OCI-LY7 (cell line): ENCODE measurements at regions of chr14 and their contacts with region 1.

Region 1: DNA sequence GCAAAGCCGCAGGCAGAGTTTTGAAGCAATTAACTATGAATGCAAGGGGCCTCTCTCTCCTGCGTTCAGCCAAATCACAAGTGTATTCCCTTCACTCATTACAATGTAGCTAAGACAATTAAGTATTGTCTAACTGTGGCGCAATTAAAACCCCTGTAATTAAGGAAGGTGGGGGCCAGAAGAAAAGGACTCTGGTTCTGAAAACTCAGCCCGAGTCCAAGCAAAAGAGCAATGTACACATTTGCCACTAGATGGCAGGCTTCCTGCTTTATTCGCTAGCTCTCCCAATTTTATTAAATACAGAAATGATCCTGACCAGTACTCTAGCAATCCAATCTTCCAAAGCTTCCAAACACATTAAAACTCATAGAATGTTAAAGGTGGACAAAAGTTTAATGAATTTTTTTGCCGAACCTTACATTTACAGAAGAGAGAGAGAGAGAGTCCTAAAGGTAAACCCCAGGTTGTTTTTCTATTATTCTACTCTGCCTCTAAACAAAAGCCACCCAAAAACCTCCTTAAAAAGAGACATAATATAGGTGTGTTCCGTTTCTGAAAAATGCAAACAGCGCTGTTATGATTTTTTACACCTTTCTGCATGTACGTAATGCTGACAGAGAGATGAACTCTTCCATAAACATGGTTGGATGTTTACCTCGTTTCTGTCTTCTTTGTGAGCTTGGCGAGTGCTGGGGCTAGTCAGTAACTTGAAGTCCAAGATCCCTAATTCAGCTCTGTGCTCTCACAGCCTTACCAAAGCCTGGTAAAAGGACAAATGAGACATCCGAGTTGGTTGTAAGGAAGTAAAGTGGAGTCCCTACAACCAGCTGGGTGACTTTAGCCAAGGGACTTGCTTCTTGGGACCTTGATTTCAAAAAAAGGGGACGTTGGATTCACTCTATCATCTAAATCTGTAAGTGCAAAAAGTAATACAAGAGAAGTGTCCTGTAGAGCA is 50.9 kb upstream of the VASH1 start:
- DNase-seq: peak; percentile 66
- H3K4me3 ChIP-seq: no peak overlapping the region
- H3K27ac ChIP-seq: no peak overlapping the region
- H3K4me1 ChIP-seq: no peaks in the 10 kb centered on the region
- CTCF ChIP-seq: peak; percentile 95

Region 2: GRCh38 chr14:76697246-76697905 is 13.0 kb before region 1 on chr14:
- CTCF ChIA-PET with region 1: no interaction called
- POLR2A ChIA-PET with region 1: no interaction called
- intact Hi-C with region 1: no loop called
- DNase-seq: no peak
- H3K4me3 ChIP-seq: no peak overlapping the region
- H3K27ac ChIP-seq: no peak overlapping the region
- H3K4me1 ChIP-seq: no peaks in the 10 kb centered on the region
- CTCF ChIP-seq: no peak

Region 3: DNA sequence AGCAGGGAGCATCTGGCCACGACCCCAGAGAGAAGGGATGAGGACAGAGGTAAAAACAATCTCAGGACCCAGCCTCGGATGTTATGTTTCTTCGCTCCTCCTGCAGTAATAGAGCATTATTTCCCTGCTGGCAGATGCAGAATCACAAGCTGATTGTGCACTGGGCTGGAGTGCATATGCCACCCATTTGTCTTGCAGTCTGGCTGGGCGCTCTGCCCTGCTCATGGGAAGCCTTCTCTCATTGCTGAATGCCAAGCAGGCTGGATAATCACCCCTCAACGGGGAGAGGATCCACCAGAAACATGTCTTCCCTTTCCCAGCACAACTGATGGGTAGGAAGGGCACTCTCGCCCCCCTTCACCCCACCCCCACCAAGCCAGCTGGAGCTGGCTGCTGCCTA is 42.4 kb after region 1 on chr14:
- CTCF ChIA-PET with region 1: no interaction called
- POLR2A ChIA-PET with region 1: no interaction called
- intact Hi-C with region 1: no loop called
- DNase-seq: no peak
- H3K4me3 ChIP-seq: no peak overlapping the region
- H3K27ac ChIP-seq: no peak overlapping the region
- H3K4me1 ChIP-seq: no peaks in the 10 kb centered on the region
- CTCF ChIP-seq: no peak

Region 4: DNA sequence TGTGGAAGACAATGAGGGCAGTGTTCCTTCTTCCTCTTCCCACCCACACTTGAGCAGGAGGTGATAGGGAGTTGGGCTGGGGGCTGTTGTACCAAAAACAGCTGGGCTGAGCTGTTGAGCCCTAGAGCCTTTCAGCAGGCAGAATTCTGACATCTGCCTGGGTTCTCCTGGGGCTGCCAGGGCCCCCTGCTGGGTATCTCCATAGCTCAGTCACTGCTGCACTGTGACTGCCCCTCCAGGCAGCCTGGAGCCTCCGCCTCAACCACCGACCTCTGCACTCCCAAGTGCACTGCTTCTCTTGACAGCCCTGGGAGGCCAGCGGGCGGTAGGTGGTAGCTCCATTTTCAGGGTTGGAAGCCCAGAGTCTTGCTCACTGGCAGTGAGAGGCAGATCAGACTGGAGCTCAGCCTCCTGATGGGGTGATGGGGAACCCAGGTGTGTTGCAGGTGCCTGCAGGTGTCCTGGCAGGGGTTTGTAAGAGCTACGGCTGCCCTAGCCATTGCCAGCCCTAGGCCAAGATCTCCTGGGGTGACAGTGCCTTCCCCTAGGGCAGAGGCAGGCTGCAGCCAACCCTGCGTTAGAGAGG is 66.4 kb after region 1 on chr14:
- CTCF ChIA-PET with region 1: interaction called, 5 read pairs
- POLR2A ChIA-PET with region 1: interaction called, 3 read pairs
- intact Hi-C with region 1: loop called (anchors 2 kb)
- DNase-seq: peak; percentile 23
- H3K4me3 ChIP-seq: no peak overlapping the region
- H3K27ac ChIP-seq: no peak overlapping the region
- H3K4me1 ChIP-seq: no peaks in the 10 kb centered on the region
- CTCF ChIP-seq: peak; percentile 57

Region 5: DNA sequence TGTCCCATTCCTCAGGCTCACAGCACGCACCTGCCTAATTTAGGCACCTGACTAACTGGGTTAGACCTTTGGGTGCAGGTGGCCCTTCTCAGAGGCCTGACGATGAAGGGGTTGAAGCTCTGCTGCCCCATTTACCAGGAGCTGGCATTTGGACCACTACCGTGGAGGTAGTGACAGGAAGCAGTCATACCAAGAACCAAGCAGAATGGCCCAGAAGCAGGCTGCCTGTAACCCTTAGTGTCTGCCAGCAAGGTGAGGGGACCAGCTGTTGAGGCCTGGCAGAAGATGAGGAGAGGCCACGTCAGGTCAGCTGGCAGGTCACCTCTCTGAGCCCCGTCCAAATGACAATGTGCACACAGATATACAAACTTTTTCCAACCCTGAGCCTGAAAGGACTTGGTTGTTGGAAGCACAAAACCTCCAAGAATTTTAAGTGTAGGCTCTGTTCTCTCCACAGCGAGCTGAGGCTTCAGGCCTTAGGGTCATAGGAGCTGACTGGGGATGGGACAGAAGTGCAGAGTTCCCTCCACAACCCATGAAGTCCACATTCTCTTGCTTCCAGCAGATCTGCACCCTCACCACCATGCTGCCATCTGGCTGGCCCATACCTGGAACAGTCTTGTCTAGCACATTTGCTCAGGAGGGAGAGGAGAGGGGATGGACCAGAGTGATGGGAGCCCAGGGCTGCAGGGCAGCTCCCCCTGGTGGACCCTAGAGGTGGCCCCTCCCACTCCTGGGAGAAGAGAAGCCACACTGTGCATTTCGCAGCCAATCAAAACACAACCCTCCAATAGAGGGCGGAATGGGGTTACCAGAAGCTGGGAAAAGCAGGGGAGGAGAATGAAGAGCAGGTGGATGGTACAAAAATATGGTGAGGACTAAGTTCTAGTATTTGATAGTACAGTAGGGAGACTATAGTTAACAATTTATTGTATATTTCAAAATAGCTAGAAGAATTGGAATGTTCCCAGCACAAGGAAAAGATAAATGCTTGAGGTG is 74.2 kb after region 1 on chr14:
- CTCF ChIA-PET with region 1: interaction called, 4 read pairs
- POLR2A ChIA-PET with region 1: interaction called, 4 read pairs
- intact Hi-C with region 1: loop called (anchors 1 kb)
- DNase-seq: peak; percentile 75
- H3K4me3 ChIP-seq: no peak overlapping the region
- H3K27ac ChIP-seq: no peak overlapping the region
- H3K4me1 ChIP-seq: no peaks in the 10 kb centered on the region
- CTCF ChIP-seq: peak; percentile 93

Region 6: DNA sequence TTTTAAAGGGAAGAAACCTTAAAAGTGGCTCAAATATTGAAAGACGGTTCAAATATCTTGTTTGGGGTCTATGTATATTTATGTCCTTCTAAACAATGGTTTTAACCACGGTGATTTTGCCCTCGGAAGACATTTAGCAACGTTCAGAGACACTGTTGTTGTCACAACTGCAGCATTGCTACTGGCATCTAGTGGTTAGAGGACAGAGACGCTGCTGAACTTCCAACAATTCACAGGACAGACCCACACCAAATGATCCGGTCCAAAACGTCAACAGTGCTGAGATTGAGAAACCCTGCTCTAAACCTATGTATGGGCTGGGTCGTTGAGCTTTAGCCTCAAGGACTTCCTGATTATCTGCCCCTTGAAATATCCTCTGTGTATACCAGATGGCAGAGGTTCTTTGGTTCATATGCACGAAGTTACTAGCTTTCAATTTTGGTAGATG is 100.6 kb after region 1 on chr14:
- CTCF ChIA-PET with region 1: interaction called, 7 read pairs
- POLR2A ChIA-PET with region 1: interaction called, 6 read pairs
- intact Hi-C with region 1: loop called (anchors 1 kb)
- DNase-seq: peak; percentile 56
- H3K4me3 ChIP-seq: peak overlapping the region; percentile 83
- H3K27ac ChIP-seq: peak overlapping the region; percentile 42
- H3K4me1 ChIP-seq: peaks cover 22% of the 10 kb centered on the region
- CTCF ChIP-seq: peak; percentile 82